ENCODE measurements at regions of chr4 and their contacts with region 1.

Region 1: DNA sequence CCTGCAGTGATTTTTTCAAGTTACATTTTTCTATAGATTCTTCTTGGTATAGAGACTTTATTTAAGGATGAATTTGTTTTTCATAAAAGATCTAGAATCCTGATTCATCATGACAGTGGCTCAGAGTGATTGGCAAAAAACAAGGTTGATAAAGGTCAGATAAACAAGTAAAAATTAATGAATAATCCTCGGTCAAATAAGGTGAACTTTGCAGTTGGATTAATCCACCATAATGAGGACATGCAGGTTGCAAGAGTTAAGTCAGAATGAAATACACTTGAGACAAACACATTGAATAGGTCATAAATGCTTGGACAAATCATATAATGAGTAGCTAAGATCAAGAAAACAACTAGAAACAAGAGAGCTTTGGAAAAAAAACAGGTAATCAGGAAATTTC is 22.9 kb upstream of the UGT2B7 start:
- DNase-seq: no peak
- ATAC-seq: no peak
- H3K4me3 ChIP-seq: no peak overlapping the region
- H3K27ac ChIP-seq: no peak overlapping the region
- H3K4me1 ChIP-seq: no peaks in the 10 kb centered on the region
- H3K27me3 ChIP-seq: no peaks in the 10 kb centered on the region
- CTCF ChIP-seq: no peak
- POLR2A ChIP-seq: no peak
- RAD21 ChIP-seq: no peak

Region 2: DNA sequence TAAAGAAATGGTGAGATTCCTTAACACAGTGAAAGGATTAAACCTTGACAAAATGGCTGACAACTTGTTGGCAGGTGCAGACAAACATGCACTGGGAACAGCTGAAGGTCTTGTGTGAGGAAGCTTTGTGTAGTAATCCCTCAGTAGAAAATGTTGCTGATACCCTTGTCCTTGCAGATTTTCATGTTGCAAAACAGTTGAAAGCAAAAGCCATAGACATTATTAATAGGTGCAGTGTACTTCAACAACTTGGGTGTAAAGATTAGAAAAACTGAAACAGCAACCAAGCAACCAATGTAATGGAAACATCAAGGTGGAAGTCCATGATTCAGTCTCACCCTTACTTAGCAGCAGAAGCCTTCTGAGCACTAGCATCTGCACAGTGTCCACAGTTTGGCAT is 52.6 kb after region 1 on chr4:
- CTCF ChIA-PET with region 1: no interaction called
- POLR2A ChIA-PET with region 1: no interaction called
- dilution Hi-C with region 1: no loop called
- in situ Hi-C with region 1: no loop called
- intact Hi-C with region 1: loop called (anchors 5 kb)
- DNase-seq: no peak
- ATAC-seq: no peak
- H3K4me3 ChIP-seq: no peak overlapping the region
- H3K27ac ChIP-seq: no peak overlapping the region
- H3K4me1 ChIP-seq: no peaks in the 10 kb centered on the region
- H3K27me3 ChIP-seq: no peaks in the 10 kb centered on the region
- CTCF ChIP-seq: no peak
- POLR2A ChIP-seq: no peak
- RAD21 ChIP-seq: no peak

Measured in IMR-90 (cell line).